A549 (cell line): ENCODE measurements at regions of chr1 and their contacts with region 1.

Region 1: GRCh38 chr1:37989361-37989930 is 376 bp downstream of the SF3A3 start:
- DNase-seq: no peak
- ATAC-seq: peak; percentile 63 to 70
- H3K4me3 ChIP-seq: peak overlapping the region; percentile 99
- H3K27ac ChIP-seq: peak overlapping the region; percentile 92 to 94
- H3K4me1 ChIP-seq: peaks cover 13% of the 10 kb centered on the region
- CTCF ChIP-seq: no peak
- EP300 ChIP-seq: no peak
- POLR2A ChIP-seq: no peak
- RAD21 ChIP-seq: no peak

Region 2: GRCh38 chr1:37828410-37829074 is 160.9 kb before region 1 on chr1:
- CTCF ChIA-PET with region 1: no interaction called
- POLR2A ChIA-PET with region 1: no interaction called
- DNase-seq: no peak
- ATAC-seq: no peak
- H3K4me3 ChIP-seq: no peak overlapping the region
- H3K27ac ChIP-seq: no peak overlapping the region
- H3K4me1 ChIP-seq: peaks cover 8% of the 10 kb centered on the region; the same call in 2 of the 3 replicates
- CTCF ChIP-seq: no peak
- EP300 ChIP-seq: no peak
- POLR2A ChIP-seq: no peak
- RAD21 ChIP-seq: no peak

Region 3: DNA sequence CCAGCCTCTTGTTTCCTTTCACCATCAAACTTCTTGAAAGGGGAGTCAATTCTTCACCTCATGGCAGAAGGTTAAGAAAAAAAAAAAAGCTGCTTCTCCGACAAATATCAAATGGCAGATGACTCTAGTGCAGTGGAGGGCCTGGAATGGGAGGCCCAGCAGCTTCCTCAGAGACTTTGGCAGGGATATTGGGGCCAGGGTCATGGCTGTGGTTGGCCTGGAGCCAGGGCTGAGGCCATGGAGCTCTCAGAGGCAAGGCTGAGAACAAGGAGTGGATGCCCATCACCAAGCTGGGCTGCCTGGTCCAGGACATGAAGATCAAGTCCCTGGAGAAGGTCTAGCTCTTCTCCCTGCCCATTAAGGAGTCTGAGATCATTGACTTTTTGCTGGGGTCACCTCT is 148.7 kb before region 1 on chr1:
- CTCF ChIA-PET with region 1: no interaction called
- POLR2A ChIA-PET with region 1: no interaction called
- DNase-seq: no peak
- ATAC-seq: no peak
- H3K4me3 ChIP-seq: no peak overlapping the region
- H3K27ac ChIP-seq: no peak overlapping the region
- H3K4me1 ChIP-seq: peaks cover 19% of the 10 kb centered on the region
- CTCF ChIP-seq: no peak
- EP300 ChIP-seq: no peak
- POLR2A ChIP-seq: no peak
- RAD21 ChIP-seq: no peak

Region 4: GRCh38 chr1:37867758-37868157 is 121.7 kb before region 1 on chr1:
- CTCF ChIA-PET with region 1: no interaction called
- POLR2A ChIA-PET with region 1: no interaction called
- DNase-seq: no peak
- ATAC-seq: peak; percentile 53 to 54; a peak in 3 of 6 replicates
- H3K4me3 ChIP-seq: no peak overlapping the region
- H3K27ac ChIP-seq: no peak overlapping the region
- H3K4me1 ChIP-seq: peaks cover 15% of the 10 kb centered on the region
- CTCF ChIP-seq: no peak
- EP300 ChIP-seq: no peak
- POLR2A ChIP-seq: no peak
- RAD21 ChIP-seq: no peak

Region 5: DNA sequence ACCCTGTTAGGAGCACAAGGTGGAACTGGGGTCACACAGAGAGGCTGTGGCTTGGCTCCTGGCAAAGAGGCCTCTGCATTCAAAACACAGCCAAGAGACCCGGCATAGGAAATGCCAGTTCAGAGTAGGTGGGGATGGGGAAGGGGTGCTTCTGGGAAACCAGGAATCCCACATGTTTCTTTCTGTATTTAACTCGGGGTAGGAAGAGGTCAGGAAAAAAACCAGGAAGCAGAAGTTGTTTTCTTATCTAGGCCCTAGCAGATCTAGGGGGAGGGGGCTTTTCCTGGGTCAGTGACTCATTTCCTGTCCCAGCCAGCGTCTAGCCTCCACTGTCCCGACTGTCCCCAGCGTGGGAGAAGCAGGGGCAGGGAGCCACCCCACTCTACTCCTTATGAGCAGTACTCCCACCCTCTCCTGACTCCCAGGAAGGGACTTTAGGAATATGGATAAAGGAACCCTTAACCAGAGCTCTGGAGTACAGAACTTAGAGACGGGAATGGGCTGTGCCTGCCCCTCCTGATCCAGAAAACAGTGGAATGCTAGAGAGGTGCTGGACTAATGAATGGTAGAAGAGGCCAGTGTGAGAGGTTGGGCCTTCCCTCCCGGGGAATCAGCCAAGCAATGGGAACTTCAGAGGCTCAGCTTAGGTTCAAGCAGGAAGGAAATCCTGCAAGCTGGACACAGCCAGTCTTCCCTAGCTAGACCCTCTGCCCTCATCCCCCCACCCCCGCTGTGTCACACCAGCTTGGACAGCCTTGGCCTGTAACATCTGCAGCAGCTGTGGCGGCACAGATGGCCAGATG is 10.2 kb after region 1 on chr1:
- CTCF ChIA-PET with region 1: interaction called, 53 read pairs
- POLR2A ChIA-PET with region 1: no interaction called
- DNase-seq: peak in 1 of 2 experiments; percentile 60
- ATAC-seq: peak; percentile 15 to 58; a peak in 3 of 6 replicates
- H3K4me3 ChIP-seq: no peak overlapping the region
- H3K27ac ChIP-seq: peak overlapping the region; percentile 74 to 87
- H3K4me1 ChIP-seq: peaks cover 43% of the 10 kb centered on the region
- CTCF ChIP-seq: no peak
- EP300 ChIP-seq: no peak
- POLR2A ChIP-seq: no peak
- RAD21 ChIP-seq: no peak

Region 6: DNA sequence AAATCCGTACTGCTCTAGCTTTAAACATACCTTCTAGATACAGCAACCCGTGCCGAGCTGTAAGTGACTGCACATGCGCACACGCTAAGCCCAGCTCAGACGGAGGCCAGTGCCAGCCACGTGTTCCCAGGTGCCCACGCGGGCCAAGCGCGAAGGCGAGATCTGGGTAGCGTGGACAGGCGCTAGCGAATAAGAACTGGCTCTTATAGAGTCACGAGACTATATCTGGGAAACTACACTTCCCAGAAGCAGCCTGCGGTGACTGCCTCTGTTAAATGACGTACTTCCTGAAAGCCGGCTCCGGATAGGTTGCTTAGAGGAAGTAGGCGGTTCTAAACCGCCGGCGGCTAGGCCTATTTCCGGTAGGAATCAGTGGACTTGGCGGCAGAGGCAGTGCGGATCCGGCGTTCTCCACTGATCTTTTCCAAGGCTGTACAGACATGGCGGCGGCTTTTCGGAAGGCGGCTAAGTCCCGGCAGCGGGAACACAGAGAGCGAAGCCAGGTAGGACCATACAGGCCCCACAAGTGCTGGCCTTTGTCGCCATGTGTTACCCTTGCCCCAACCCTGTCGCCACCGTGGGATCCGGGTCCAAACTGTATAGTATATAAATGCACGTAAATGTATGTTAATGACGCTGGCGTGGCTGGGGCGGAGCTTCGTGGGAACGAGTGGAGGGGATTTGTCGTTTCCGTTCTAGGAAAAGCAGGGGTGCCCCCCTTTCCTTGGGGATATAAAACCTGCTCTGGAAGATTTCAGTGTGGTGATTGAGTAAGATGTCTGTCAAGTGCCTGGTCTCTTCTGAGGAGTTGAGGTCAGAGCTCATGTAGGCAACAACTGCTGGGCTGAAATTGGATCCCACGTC is 23.1 kb after region 1 on chr1 and contains the start of gene UTP11:
- CTCF ChIA-PET with region 1: interaction called, 13 read pairs
- POLR2A ChIA-PET with region 1: no interaction called
- DNase-seq: peak; percentile 96 to 99
- ATAC-seq: peak; percentile 98 to 99
- H3K4me3 ChIP-seq: peak within 1 kb of the TSS; percentile 68
- H3K27ac ChIP-seq: peak within 1 kb of the TSS; percentile 94 to 95
- H3K4me1 ChIP-seq: peaks cover 30% of the 10 kb centered on the region
- CTCF ChIP-seq: no peak
- EP300 ChIP-seq: no peak
- POLR2A ChIP-seq: peak; percentile 71
- RAD21 ChIP-seq: no peak
- polyA plus RNA-seq, gene UTP11: 27.0 and 37.6 TPM in 2 replicates

Region 7: DNA sequence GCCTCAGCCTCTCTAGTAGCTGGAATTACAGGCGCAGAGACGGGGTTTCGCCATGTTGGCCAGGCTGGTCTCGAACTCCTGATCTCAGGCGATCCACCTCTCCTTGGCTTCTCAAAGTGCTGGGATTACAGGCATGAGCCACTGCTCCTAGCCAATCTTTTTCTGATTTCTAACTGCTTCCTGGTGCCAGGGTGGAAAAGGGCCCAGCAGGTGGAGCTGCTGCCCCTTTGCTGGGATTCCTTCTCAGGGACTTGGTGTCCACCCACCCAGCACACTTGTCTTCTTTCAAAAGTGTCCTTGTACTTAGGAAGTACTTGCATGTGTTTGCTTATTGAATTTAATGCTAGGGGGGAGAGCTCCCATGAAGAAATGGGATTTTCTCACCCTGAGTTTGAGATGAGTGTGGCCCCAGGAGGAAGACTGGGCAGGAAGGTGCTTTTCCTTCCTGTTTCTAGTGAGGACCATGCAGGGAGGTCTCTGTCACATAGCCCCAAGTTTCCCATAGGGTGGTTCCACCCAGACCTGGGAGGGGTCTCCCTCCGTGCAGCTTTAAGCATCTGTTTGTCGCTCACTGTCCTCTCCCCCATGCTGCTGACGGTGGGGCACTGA is 37.2 kb after region 1 on chr1:
- CTCF ChIA-PET with region 1: interaction called, 10 read pairs
- POLR2A ChIA-PET with region 1: no interaction called
- DNase-seq: peak; percentile 50 to 56
- ATAC-seq: peak; percentile 57 to 80; a peak in 4 of 6 replicates
- H3K4me3 ChIP-seq: no peak overlapping the region
- H3K27ac ChIP-seq: no peak overlapping the region
- H3K4me1 ChIP-seq: 0 out of 3 replicates have a peak, but pooled peaks cover 3% of the 10 kb centered on the region
- CTCF ChIP-seq: peak; percentile 60
- EP300 ChIP-seq: no peak
- POLR2A ChIP-seq: no peak
- RAD21 ChIP-seq: peak; percentile 67 to 76

Region 8: DNA sequence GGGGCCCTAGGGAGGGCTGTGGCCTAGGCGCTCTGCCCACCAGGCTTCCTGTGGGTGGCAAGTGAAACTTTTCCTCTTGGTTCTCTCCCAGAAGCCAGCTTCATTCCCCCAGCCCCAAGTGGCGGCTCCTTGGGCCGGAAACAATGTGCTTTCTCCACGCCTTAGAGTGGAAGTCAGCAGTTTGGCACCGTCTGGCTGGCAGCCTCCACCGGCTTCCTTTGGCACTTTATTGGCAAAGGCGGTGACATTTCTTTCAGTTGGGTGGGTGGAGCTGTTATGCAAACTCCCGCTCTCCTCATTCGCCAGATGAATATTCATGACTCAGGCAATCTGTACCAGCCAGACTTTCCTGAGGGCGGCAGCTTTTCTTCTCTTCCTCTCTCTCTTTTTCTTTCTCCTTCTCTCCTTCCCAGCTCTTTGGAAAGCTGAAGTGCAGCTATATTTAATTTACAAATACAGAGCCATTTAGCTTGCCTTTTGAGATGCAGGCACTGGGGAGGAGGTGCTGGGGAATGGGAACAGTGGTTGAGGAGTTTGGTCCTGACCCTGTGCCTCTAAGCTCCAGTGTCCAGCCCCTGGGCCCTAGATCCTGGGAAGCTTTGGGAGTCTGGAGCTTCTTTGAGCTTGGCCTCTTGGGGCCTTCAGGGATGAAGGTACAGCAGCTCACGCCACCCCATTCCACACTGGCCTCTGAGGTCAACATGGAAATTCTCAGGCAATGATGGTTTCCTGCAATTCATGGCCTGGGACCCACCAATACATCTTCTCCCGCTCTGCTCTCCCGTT is 125.0 kb after region 1 on chr1:
- CTCF ChIA-PET with region 1: no interaction called
- POLR2A ChIA-PET with region 1: no interaction called
- DNase-seq: no peak
- ATAC-seq: no peak
- H3K4me3 ChIP-seq: no peak overlapping the region
- H3K27ac ChIP-seq: no peak overlapping the region
- H3K4me1 ChIP-seq: no peaks in the 10 kb centered on the region
- CTCF ChIP-seq: no peak
- EP300 ChIP-seq: no peak
- POLR2A ChIP-seq: no peak
- RAD21 ChIP-seq: no peak